WTC11 (cell line): ENCODE measurements at regions of chr12 and their contacts with region 1.

Region 1: GRCh38 chr12:6613776-6614512 is 6.8 kb upstream of the CHD4 start:
- DNase-seq: peak; percentile 91
- ATAC-seq: peak; percentile 86
- H3K4me3 Mint-ChIP-seq: peak overlapping the region; percentile 49
- H3K27ac Mint-ChIP-seq: peak overlapping the region; percentile 73
- H3K4me1 Mint-ChIP-seq: peaks cover 37% of the 10 kb centered on the region
- H3K27me3 Mint-ChIP-seq: peaks cover 7% of the 10 kb centered on the region
- CTCF ChIP-seq: no peak

Region 2: DNA sequence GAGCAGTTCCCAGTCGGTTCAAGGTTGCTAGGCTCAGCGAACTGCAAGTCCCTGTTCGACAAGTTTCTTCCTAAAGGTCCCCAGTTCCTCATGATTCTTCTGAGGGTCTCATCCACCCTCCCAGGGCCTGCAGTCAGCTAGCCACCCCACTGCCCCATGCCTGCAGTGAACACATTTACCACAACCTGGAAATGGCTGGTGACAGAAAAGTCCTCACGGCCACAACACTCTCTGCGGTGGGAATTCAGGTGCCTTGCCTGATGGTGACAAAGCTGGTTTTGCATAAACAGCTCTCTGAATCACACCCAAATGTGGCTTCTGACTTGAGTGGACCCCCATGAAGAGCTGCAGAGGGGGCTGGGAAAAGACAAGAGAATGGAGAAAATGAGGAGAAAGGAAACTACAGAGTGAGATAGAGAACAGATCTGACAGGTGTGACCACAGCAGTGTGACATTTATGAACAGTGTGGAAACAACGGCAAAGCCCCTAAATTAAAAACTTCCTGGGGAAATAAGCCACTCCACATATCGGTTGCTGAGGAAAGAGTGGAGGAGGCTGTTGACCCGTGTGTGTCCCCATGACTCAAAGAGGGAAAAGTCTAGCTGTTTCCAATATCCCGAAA is 170.5 kb before region 1 on chr12:
- CTCF ChIA-PET with region 1: no interaction called
- POLR2A ChIA-PET with region 1: no interaction called
- DNase-seq: no peak
- ATAC-seq: no peak
- H3K4me3 Mint-ChIP-seq: no peak overlapping the region
- H3K27ac Mint-ChIP-seq: no peak overlapping the region; the same call in 1 of the 2 replicates
- H3K4me1 Mint-ChIP-seq: peaks cover 8% of the 10 kb centered on the region
- H3K27me3 Mint-ChIP-seq: no peaks in the 10 kb centered on the region
- CTCF ChIP-seq: no peak

Region 3: DNA sequence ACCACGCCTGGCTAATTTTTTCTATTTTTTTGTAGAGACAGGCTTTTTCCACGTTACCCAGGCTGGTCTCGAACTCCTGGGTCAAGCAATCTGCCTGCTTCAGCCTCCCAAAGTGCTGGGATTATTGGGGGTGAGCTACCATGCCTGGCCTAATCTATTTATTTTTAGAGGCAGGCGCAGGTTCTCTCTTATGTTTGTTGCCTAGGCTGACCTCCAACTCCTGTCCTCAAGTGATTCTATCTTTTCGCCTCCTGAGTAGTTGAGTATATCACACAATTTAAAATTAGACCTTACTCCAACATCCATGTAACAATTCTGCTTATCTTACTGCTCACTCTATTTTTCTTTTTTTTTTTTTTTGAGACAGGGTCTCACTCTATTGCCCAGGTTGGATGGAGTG is 40.0 kb after region 1 on chr12:
- CTCF ChIA-PET with region 1: no interaction called
- POLR2A ChIA-PET with region 1: no interaction called
- DNase-seq: no peak
- ATAC-seq: no peak
- H3K4me3 Mint-ChIP-seq: no peak overlapping the region
- H3K27ac Mint-ChIP-seq: no peak overlapping the region
- H3K4me1 Mint-ChIP-seq: no peaks in the 10 kb centered on the region
- H3K27me3 Mint-ChIP-seq: no peaks in the 10 kb centered on the region
- CTCF ChIP-seq: no peak

Region 4: DNA sequence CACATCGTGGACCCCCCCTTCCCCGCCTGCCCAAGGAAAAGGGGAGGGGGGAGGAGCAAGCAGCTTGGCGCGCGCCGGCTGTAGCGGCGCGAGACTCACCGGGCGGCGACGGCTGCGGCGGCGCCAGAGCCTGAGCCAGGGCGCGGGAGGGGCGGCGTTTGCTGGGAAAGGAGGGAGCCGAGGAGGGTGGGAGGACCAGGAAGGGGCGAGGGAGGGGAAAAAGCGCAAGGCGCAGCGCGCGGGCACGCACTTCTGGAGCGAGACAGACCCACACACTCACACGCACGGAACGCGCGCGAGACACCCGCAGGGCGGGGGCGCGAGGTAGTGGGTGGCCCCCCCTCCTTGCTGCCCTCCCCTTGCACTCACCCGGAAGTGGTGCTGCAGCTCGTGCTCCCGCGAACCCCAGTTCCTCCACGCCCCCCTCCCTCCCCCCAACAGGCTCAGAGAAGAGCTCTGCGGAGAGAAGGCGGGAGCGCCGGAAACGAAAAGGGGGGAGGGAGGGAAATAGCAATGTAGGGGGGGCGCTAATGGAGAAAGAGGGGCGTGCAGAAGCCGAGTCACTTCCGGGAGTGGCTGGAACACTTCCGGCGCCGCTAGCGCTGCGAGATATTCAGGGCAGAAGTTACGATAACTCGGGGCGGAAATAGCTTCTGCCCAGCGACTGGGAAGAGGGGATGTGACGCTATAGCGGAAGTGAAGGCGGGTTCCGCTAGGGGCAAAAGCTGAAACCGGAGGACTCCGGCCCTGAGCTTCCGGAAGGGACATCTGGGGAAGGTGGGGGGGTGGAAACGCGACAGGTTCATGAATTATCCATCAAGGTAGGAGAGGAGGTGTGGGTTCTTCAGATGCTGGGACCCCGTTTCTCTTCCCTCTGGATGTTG is 75.3 kb after region 1 on chr12 and contains the start of gene ZNF384:
- CTCF ChIA-PET with region 1: interaction called, 17 read pairs
- POLR2A ChIA-PET with region 1: interaction called, 25 read pairs
- DNase-seq: peak; percentile 95
- ATAC-seq: peak; percentile 81
- H3K4me3 Mint-ChIP-seq: peak within 1 kb of the TSS; percentile 86
- H3K27ac Mint-ChIP-seq: peak within 1 kb of the TSS; percentile 95
- H3K4me1 Mint-ChIP-seq: peaks cover 23% of the 10 kb centered on the region
- H3K27me3 Mint-ChIP-seq: 0 out of 2 replicates have a peak, but pooled peaks cover under 1% of the 10 kb centered on the region
- CTCF ChIP-seq: no peak
- total RNA-seq, gene ZNF384: 63.8 to 64.7 TPM (median 64.4 TPM) in 3 replicates

Region 5: GRCh38 chr12:6697584-6698351 is 83.8 kb after region 1 on chr12:
- CTCF ChIA-PET with region 1: interaction called, 20 read pairs
- POLR2A ChIA-PET with region 1: no interaction called
- DNase-seq: peak; percentile 71
- ATAC-seq: peak; percentile 78
- H3K4me3 Mint-ChIP-seq: peak overlapping the region; percentile 29; the same call in 1 of the 2 replicates
- H3K27ac Mint-ChIP-seq: no peak overlapping the region; the same call in 1 of the 2 replicates
- H3K4me1 Mint-ChIP-seq: peaks cover 25% of the 10 kb centered on the region
- H3K27me3 Mint-ChIP-seq: peaks cover 43% of the 10 kb centered on the region
- CTCF ChIP-seq: peak; percentile 36; the same call in 1 of the 2 replicates

Region 6: DNA sequence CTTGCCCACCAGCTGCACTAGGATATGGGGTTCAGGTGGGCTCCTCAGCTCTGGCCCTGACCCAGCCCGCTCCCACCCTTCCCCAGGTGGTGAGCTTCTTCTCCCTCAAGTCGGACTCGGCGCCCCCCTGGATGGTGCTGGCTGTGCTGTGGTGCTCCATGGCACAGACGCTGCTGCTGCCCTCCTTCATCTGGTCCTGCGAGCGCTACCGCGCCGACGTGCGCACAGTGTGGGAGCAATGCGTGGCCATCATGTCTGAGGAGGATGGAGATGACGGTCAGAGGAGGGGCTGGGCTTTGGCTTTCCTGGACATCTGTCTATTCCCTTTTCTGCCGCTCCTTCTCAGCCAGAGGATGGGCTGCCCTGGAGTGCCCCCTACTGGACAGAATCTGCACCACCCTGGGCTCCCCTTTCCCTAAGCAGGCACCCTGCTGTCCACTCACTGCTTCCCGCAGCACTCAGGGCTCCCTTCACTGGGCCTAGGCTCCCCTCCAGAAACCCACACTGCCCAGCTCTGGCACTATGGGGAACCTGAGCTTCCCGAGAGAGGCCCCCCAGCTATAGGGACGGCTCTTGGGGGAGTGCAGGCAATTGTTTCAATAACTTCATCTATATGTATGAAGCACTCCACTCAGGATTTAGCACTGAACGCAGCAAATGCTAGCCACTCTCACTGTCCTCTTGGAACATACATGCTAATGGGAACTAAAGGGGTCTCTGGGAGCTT is 211.6 kb after region 1 on chr12:
- CTCF ChIA-PET with region 1: no interaction called
- POLR2A ChIA-PET with region 1: no interaction called
- DNase-seq: peak; percentile 95
- ATAC-seq: peak; percentile 35
- H3K4me3 Mint-ChIP-seq: peak overlapping the region; percentile 78
- H3K27ac Mint-ChIP-seq: no peak overlapping the region
- H3K4me1 Mint-ChIP-seq: peaks cover 60% of the 10 kb centered on the region
- H3K27me3 Mint-ChIP-seq: peaks cover 45% of the 10 kb centered on the region
- CTCF ChIP-seq: peak; percentile 90